ENCODE measurements at regions of chr5 and their contacts with region 1.

Region 1: DNA sequence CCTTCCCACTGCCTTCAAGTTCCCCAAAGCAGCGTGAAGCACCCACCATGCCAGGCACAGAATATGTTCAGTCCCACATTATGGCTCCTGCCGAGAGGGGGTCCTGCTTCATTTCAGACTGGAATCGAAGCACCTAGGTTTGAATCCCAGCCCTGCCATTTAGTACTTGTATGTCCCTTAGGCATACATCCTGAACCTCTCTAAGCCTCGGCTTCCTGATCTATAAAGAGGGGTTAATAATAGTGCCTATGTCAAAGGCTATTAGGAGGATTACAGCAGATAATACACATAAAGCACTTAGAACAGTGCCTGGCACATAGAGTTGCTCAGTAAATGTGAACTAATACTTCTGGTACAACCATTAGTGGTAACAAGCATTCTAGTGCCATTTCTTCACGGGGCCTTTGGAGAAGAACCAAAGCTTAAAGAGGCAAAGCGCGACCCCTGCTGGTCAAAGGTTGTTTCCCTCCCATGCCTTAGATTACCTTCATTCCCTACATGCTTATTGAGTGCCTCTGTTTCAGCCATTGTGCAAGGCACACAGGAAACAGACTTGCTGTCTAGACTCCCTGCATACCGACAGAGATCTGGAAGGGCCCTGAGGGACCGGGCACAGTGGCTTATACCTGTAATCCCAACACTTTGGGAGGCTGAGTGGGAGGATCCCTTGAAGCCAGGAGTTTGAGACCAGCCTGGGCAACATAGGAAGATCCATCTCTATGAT is 98.2 kb downstream of the PPARGC1B start:
- DNase-seq: peak; percentile 72 to 97 (median 89)
- ATAC-seq: peak; percentile 84
- H3K4me3 ChIP-seq: no peak overlapping the region
- H3K4me1 ChIP-seq: peaks cover 8% of the 10 kb centered on the region
- CTCF ChIP-seq: peak; percentile 48

Region 2: GRCh38 chr5:149345147-149345875 is 483.0 kb before region 1 on chr5 and contains the start of gene GRPEL2:
- intact Hi-C with region 1: no loop called
- DNase-seq: peak; percentile 95 to 97 (median 95)
- ATAC-seq: peak; percentile 100
- H3K4me3 ChIP-seq: peak within 1 kb of the TSS; percentile 49
- H3K4me1 ChIP-seq: peaks cover 5% of the 10 kb centered on the region
- CTCF ChIP-seq: peak; percentile 11
- total RNA-seq, gene GRPEL2: 9.9 to 15.2 (median 11.1) TPM

Region 3: GRCh38 chr5:149636851-149637246 is 191.5 kb before region 1 on chr5:
- intact Hi-C with region 1: loop called (anchors 5 to 10 kb)
- DNase-seq: peak in 2 of 3 donors; percentile 92 to 95
- ATAC-seq: peak; percentile 28
- H3K4me3 ChIP-seq: no peak overlapping the region
- H3K4me1 ChIP-seq: peaks cover 28% of the 10 kb centered on the region
- CTCF ChIP-seq: peak; percentile 53

Region 4: DNA sequence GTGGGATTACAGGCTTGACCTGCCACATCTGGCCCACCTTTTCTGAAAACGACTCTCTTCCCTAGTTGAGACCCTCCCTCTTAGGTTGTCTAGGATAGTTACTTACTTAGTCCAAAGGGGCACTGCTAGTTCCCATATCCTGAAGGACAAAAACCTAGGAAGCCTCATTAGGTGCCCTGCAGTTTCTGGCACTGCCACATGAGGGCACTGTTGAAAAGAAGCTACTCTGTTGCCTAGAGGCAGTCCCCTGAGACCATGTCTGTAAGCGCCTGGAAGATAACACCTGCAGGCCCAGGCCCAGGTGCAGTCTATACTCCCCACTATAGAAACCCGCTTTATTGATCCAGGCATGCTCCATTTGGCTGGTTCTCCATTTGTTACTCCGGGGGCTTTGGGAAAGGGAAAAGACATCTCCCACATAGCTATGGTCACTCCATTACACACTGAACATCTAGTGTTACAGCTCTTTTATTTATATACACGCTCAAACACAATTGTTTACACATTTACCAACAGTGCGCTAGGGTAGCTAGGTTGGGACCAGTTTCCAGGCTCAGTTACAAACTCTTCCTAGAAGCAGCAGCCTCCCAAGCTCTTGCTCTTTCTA is 171.6 kb before region 1 on chr5:
- intact Hi-C with region 1: loop called in 1 of 2 experiments (anchors 5 kb)
- DNase-seq: peak in 2 of 3 donors; percentile 85 to 86
- ATAC-seq: peak; percentile 86
- H3K4me3 ChIP-seq: no peak overlapping the region
- H3K4me1 ChIP-seq: peaks cover 26% of the 10 kb centered on the region
- CTCF ChIP-seq: peak; percentile 61

Region 5: GRCh38 chr5:149731639-149732323 is 96.5 kb before region 1 on chr5:
- intact Hi-C with region 1: loop called in 1 of 2 experiments (anchors 5 kb)
- DNase-seq: peak; percentile 74 to 94 (median 94)
- ATAC-seq: peak; percentile 72
- H3K4me3 ChIP-seq: peak overlapping the region; percentile 95
- H3K4me1 ChIP-seq: peaks cover 13% of the 10 kb centered on the region
- CTCF ChIP-seq: no peak

Region 6: GRCh38 chr5:149775785-149776184 is 52.5 kb before region 1 on chr5:
- intact Hi-C with region 1: loop called in 1 of 2 experiments (anchors 10 kb)
- DNase-seq: no peak
- ATAC-seq: no peak
- H3K4me3 ChIP-seq: no peak overlapping the region
- H3K4me1 ChIP-seq: peaks cover 86% of the 10 kb centered on the region
- CTCF ChIP-seq: no peak

Measured in mucosa of descending colon (tissue), 3 donors.